Activated naive CD4-positive, alpha-beta T cell treated with anti-CD3 and anti-CD28 coated beads for 36 hours (primary cell): ENCODE measurements at regions of chr22 and their contacts with region 1.

Region 1: GRCh38 chr22:31345331-31346254 is 553 bp downstream of the PATZ1 start:
- DNase-seq: peak; percentile 86
- H3K4me3 Mint-ChIP-seq: peak overlapping the region; percentile 90
- H3K27ac Mint-ChIP-seq: peak overlapping the region; percentile 94
- H3K4me1 Mint-ChIP-seq: peaks cover 42% of the 10 kb centered on the region
- H3K27me3 Mint-ChIP-seq: no peaks in the 10 kb centered on the region

Region 2: DNA sequence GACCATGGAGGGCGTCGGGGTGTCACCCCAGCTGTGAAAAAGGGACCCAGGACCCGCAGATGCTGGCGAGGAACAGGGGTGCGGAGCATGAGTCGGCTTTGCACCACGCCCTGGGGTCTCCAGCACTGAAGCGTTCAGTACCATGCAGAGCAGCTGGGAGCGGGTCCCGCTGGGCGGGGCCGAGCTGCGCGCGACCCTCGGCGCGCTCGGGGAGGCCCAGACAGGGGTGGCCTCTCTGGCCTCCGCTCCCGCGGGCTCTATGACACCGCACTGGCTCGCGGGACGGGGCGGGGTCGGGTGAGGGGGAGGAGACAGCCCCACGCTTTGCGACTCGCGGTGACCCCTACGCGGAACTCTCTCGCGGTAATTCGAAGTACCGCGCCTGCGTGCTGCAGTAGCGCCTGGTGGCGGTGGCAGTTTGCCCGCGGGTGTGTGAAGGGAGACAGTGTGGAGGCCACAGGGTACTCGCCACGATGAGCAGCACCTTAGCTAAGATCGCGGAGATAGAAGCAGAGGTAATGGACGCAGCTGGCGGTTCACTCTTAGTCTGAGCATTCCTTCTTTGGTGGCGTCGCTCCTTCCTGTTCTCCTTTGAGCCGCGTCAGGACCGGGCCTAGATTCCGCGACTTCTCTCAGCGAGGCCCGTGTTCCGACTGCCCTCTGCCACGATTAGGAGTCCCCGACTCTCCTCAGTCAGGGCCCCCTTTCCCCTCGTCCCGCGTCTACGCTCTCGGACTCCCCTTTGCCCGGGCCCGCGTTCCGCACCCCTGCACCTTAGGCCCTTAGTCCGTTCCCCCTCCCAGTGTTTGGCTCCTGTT is 53.8 kb after region 1 on chr22 and contains the start of gene DRG1:
- CTCF ChIA-PET with region 1: interaction called, 3 read pairs
- intact Hi-C with region 1: loop called (anchors 1 kb)
- DNase-seq: peak; percentile 98
- H3K4me3 Mint-ChIP-seq: peak within 1 kb of the TSS; percentile 92
- H3K27ac Mint-ChIP-seq: peak within 1 kb of the TSS; percentile 82
- H3K4me1 Mint-ChIP-seq: peaks cover 21% of the 10 kb centered on the region
- H3K27me3 Mint-ChIP-seq: no peaks in the 10 kb centered on the region
- total RNA-seq, gene DRG1: 77.1 to 78.7 TPM

Region 3: GRCh38 chr22:31489604-31490495 is 144.3 kb after region 1 on chr22 and contains the start of gene EIF4ENIF1:
- CTCF ChIA-PET with region 1: interaction called, 3 read pairs
- intact Hi-C with region 1: loop called (anchors 2 kb)
- DNase-seq: peak; percentile 88
- H3K4me3 Mint-ChIP-seq: peak within 1 kb of the TSS; percentile 83
- H3K27ac Mint-ChIP-seq: peak within 1 kb of the TSS; percentile 97
- H3K4me1 Mint-ChIP-seq: peaks cover 50% of the 10 kb centered on the region
- H3K27me3 Mint-ChIP-seq: no peaks in the 10 kb centered on the region
- total RNA-seq, gene EIF4ENIF1: 28.1 to 29.0 TPM

Region 4: DNA sequence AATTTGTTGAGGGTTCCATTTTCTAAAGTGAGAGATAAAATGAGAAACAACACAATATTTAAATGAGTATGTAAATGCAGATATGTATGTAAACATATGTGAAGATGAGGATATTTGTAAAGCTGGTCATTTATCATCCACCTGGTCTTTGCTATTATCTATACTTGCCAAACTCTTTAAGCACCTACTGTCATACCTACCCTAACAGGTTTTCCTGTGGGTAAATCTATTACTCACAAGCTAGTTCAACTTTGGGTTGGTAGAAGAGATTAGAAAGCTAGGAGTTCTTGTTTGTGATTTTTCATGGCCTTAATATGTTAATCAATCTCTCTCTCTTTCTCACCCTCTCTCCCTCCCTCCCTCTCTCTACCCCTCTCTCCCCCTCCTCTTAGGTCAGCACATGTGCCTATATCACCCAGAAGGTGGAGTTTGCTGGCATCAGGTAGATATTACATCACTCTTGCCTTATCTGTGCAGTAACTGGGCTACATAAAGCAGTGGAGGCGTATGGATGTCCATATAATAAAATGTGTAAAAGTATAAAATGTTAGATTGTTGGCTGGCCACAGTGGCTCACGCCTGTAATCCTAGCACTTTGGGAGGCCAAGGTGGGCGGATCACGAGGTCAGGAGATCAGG is 422.9 kb after region 1 on chr22:
- CTCF ChIA-PET with region 1: no interaction called
- intact Hi-C with region 1: no loop called
- DNase-seq: no peak
- H3K4me3 Mint-ChIP-seq: no peak overlapping the region
- H3K27ac Mint-ChIP-seq: peak overlapping the region; percentile 50
- H3K4me1 Mint-ChIP-seq: peaks cover 12% of the 10 kb centered on the region
- H3K27me3 Mint-ChIP-seq: no peaks in the 10 kb centered on the region